CD4-positive, alpha-beta T cell (primary cell): ENCODE measurements at regions of chr1 and their contacts with region 1.

Region 1: DNA sequence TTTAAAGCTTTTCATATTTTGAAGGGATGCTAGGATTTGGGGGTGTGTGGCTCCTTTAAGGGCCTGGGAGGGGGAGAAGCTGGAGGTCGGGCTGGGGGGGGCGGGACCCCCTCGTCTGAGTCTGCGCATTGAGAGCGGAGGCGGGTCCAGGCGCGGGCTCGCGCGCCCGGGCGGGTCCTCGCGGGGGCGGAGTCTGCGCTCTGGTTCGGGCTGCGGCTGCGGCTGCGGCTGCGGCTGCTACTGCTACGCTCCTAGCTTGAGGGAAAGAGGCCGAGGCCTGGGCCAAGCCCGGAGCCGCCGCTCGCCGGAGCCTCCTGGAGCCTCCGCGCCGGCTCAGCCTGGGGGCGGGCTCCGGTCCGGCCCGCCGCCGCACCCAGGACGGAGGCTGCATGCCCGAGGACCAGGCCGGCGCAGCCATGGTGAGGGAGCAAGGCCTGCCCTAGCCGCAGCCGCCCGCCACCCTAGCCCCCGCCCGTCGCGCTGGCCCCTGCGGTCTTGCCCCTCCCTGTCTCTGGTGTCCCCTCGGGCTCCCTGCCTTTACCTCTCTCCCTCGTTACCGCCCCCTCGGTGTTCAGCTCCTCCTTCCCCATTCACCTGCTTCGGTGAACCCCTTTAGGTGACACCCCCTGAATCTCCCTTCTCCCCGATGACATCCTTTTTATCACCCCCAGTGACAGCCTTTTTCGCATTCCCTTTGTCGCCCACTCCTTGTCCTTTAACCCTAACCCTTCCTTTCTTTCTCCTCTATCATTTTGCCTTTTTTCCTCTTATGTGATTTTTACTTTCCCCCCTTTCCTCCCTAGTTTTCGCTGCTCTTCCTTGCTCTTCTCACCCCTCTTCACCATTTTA is at the start of gene ZYG11B:
- DNase-seq: peak; percentile 85 to 96 (median 92)
- ATAC-seq: peak; percentile 91
- H3K4me3 ChIP-seq: peak within 1 kb of the TSS; percentile 79
- H3K4me3 Mint-ChIP-seq: peak within 1 kb of the TSS; percentile 95
- H3K27ac ChIP-seq: peak within 1 kb of the TSS in 1 of 2 donors; percentile 45
- H3K27ac Mint-ChIP-seq: peak within 1 kb of the TSS; percentile 77
- H3K4me1 ChIP-seq: peaks cover 36% of the 10 kb centered on the region
- H3K4me1 Mint-ChIP-seq: peaks cover 54% of the 10 kb centered on the region
- H3K27me3 ChIP-seq: no peaks in the 10 kb centered on the region
- H3K27me3 Mint-ChIP-seq: no peaks in the 10 kb centered on the region
- CTCF ChIP-seq: no peak
- total RNA-seq, gene ZYG11B: 14.1 to 16.1 TPM

Region 2: DNA sequence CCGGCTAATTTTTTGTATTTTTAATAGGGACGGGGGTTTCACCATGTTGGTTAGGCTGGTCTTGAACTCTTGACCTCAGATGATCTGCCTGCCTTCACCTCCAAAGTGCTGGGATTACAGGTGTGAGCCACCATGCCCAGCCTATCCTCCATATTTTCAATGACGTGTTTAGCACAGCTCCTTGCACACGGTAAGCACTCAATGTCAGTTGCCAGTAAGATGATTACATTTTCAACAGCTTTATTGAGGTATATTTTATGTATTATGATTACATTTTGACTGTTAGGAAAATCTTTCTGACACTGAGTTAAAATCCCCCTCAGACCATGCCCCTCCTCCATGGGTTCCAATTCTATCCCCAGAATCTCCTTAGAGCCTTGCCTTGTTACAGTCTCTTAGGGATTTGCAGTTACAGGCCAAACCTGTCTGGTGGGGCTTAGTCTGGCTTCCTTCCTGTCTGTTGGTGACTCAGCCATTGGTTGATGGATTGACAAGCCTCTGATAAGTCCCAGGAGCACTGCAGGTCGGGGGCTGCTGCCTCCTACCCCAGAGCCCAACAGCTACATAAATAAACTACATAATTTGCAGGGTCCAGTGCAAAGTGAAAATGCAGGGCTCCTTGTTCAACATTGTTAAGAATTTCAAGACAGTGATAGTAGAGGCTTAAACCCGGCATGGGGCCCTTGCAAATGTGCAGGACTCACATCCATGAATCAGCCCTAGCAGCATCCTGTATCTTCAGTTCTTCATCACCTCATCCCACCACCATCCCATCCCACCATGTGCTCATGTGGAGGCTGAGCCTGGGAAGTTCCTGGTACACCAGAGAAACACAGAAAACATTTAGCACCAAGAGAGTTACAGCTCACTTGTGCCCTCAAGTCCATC is 51.7 kb before region 1 on chr1:
- CTCF ChIA-PET with region 1: no interaction called
- POLR2A ChIA-PET with region 1: no interaction called
- intact Hi-C with region 1: no loop called
- DNase-seq: peak in 1 of 14 experiments; percentile 50
- ATAC-seq: no peak
- H3K4me3 ChIP-seq: no peak overlapping the region
- H3K4me3 Mint-ChIP-seq: no peak overlapping the region
- H3K27ac ChIP-seq: no peak overlapping the region
- H3K27ac Mint-ChIP-seq: no peak overlapping the region
- H3K4me1 ChIP-seq: peaks cover 8% of the 10 kb centered on the region
- H3K4me1 Mint-ChIP-seq: no peaks in the 10 kb centered on the region
- H3K27me3 ChIP-seq: no peaks in the 10 kb centered on the region
- H3K27me3 Mint-ChIP-seq: no peaks in the 10 kb centered on the region
- CTCF ChIP-seq: no peak

Region 3: DNA sequence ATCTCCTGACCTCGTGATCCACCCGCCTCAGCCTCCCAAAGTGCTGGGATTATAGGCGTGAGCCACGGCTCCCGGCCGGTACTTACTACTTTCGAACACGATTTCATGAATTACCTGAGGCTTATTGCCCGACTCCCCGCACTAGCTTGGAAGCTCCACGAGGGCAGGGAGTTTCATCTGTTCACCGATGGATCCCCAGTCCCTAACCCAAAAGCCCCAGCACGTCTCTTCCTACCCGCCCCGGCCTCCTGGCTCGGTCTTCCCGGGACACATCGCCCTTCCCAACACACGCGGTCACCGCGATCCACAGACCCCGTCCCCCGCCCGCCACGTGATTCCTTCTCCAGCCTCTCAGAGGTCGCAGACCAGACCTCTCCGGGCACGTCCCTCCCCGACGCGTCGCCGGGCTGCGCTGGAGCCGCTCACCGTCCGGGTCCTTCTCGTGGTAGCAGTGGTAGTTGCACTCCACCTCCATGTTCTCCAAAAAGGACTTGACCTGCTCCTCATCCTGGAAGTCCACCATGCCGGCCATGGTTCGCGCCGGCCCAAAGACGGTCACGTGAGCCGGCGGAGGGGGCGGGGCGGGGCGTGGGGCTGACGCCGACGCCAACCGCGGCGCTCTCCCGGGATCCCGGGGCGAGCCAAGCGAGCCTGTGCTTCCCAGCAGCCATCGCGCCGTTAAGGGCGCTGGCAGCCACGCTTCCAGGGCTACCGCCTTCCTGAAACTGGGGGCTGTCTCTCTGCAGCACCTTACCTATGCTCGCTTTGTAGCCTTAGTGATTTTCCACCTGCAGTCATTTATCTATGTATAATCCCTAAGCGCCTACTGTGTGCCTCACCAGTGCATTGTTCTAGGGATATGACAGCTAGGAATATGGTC is 28.5 kb before region 1 on chr1 and contains the start of gene COA7:
- CTCF ChIA-PET with region 1: interaction called, 4 read pairs
- POLR2A ChIA-PET with region 1: interaction called, 36 read pairs
- intact Hi-C with region 1: loop called (anchors 1 kb)
- DNase-seq: peak; percentile 20 to 79 (median 47)
- ATAC-seq: peak; percentile 36
- H3K4me3 ChIP-seq: peak within 1 kb of the TSS; percentile 98
- H3K4me3 Mint-ChIP-seq: peak within 1 kb of the TSS; percentile 90
- H3K27ac ChIP-seq: peak within 1 kb of the TSS; percentile 21 to 50
- H3K27ac Mint-ChIP-seq: peak within 1 kb of the TSS; percentile 68
- H3K4me1 ChIP-seq: peaks cover 22% of the 10 kb centered on the region
- H3K4me1 Mint-ChIP-seq: peaks cover 19% of the 10 kb centered on the region
- H3K27me3 ChIP-seq: no peaks in the 10 kb centered on the region
- H3K27me3 Mint-ChIP-seq: no peaks in the 10 kb centered on the region
- CTCF ChIP-seq: no peak
- total RNA-seq, gene COA7: 0.99 to 1.1 TPM

Region 4: DNA sequence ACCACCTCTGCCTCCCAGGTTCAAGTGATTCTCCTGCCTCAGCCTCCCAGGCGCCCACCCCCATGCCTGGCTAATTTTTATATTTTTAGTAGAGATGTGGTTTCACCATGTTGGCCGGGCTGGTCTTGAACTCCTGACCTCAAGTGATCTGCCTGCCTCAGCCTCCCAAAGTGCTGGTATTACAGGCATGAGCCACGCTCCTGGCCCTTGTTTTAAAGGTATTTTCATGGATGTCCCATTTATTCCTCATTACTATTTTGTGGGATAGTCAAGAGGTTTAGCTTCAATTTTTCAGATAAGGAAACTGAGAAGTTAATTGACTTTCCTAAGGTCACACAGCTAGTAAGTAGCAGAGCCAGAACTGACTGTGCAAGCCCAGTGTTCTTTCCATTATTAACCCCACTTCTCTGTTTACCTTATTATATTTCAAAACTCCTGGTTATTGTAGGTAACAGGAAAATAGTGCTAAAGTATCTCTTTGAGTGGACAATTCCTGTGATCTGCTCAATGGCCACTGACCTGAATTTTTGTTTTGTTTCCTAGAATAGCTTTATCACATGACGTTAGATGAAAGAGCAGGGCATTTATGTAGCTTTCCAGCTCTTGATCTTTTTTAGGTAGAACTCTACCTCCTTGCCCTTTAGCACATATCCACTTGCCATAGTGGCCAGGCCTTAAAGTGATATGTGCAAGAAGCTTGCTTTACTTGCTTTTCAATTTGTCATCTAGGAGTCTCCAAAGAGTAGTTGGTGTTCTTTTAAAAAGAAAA is 13.4 kb after region 1 on chr1:
- CTCF ChIA-PET with region 1: interaction called, 5 read pairs
- POLR2A ChIA-PET with region 1: interaction called, 15 read pairs
- intact Hi-C with region 1: no loop called
- DNase-seq: no peak
- ATAC-seq: no peak
- H3K4me3 ChIP-seq: no peak overlapping the region
- H3K4me3 Mint-ChIP-seq: no peak overlapping the region
- H3K27ac ChIP-seq: no peak overlapping the region
- H3K27ac Mint-ChIP-seq: no peak overlapping the region
- H3K4me1 ChIP-seq: peaks cover 2% of the 10 kb centered on the region
- H3K4me1 Mint-ChIP-seq: peaks cover 43% of the 10 kb centered on the region
- H3K27me3 ChIP-seq: no peaks in the 10 kb centered on the region
- H3K27me3 Mint-ChIP-seq: no peaks in the 10 kb centered on the region
- CTCF ChIP-seq: no peak

Region 5: GRCh38 chr1:52947490-52947889 is 221.0 kb after region 1 on chr1:
- CTCF ChIA-PET with region 1: no interaction called
- POLR2A ChIA-PET with region 1: no interaction called
- intact Hi-C with region 1: no loop called
- DNase-seq: no peak
- ATAC-seq: no peak
- H3K4me3 ChIP-seq: no peak overlapping the region
- H3K4me3 Mint-ChIP-seq: no peak overlapping the region
- H3K27ac ChIP-seq: no peak overlapping the region
- H3K27ac Mint-ChIP-seq: no peak overlapping the region
- H3K4me1 ChIP-seq: no peaks in the 10 kb centered on the region
- H3K4me1 Mint-ChIP-seq: no peaks in the 10 kb centered on the region
- H3K27me3 ChIP-seq: no peaks in the 10 kb centered on the region
- H3K27me3 Mint-ChIP-seq: no peaks in the 10 kb centered on the region
- CTCF ChIP-seq: no peak